CD8-positive, alpha-beta T cell (primary cell): ENCODE measurements at regions of chr21 and their contacts with region 1.

Region 1: DNA sequence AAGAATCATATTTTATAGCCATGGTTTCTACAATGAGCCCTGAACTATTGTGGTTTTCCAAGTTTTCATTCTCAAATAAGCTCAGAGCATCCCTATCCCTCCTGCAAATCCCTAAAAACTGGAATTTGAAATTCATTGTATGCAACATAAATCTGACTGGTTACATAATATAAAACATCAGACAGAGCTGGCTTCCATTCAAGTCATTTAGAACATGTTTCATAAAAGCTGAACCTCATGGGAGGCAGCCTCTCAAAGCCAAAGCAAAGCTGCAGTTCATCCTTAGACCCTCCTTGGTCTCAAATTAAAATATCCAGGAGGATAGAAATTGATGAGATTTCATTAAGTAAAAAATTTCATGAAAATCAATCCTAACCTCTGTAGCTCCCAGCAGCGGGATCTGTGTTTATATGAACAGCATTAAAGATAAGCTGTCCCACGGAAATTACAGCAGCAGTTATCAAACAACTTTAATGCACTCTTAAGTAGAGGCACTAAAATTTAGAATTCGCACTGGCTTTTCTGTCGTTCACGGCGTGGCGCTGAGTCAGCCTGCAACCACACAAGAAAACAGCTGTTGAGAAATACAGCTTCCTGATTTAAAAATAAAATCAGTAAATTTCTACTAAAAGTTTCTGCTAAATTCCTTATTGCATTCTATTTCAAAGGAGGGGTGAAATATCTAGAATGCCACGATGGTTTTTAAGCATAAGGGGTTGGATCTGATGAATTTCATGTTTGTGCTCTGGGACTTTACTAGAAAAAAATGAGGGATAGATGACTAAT is 99.9 kb upstream of the TIAM1 start:
- DNase-seq: peak in 5 of 9 experiments; percentile 9 to 54 (median 19)
- ATAC-seq: no peak
- H3K4me3 ChIP-seq: no peak overlapping the region
- H3K4me3 Mint-ChIP-seq: peak overlapping the region; percentile 20
- H3K27ac ChIP-seq: no peak overlapping the region
- H3K27ac Mint-ChIP-seq: peak overlapping the region; percentile 28
- H3K4me1 ChIP-seq: peaks cover 34% of the 10 kb centered on the region
- H3K4me1 Mint-ChIP-seq: peaks cover 56% of the 10 kb centered on the region
- H3K27me3 ChIP-seq: no peaks in the 10 kb centered on the region
- H3K27me3 Mint-ChIP-seq: no peaks in the 10 kb centered on the region
- CTCF ChIP-seq: no peak

Region 2: GRCh38 chr21:31132574-31133242 is 311.2 kb before region 1 on chr21:
- CTCF ChIA-PET with region 1: no interaction called
- POLR2A ChIA-PET with region 1: no interaction called
- intact Hi-C with region 1: loop called in 1 of 2 experiments (anchors 1 kb)
- DNase-seq: peak; percentile 47 to 92 (median 77)
- ATAC-seq: peak; percentile 91
- H3K4me3 ChIP-seq: peak overlapping the region; percentile 10 to 42
- H3K4me3 Mint-ChIP-seq: peak overlapping the region; percentile 80
- H3K27ac ChIP-seq: no peak overlapping the region
- H3K27ac Mint-ChIP-seq: peak overlapping the region; percentile 58
- H3K4me1 ChIP-seq: peaks cover 35% of the 10 kb centered on the region
- H3K4me1 Mint-ChIP-seq: peaks cover 47% of the 10 kb centered on the region
- H3K27me3 ChIP-seq: peaks cover 0 to 4% of the 10 kb centered on the region in 2 experiments
- H3K27me3 Mint-ChIP-seq: peaks cover 3% of the 10 kb centered on the region
- CTCF ChIP-seq: no peak

Region 3: GRCh38 chr21:31282095-31282709 is 161.7 kb before region 1 on chr21:
- CTCF ChIA-PET with region 1: no interaction called
- POLR2A ChIA-PET with region 1: no interaction called
- intact Hi-C with region 1: loop called in 1 of 2 experiments (anchors 10 kb)
- DNase-seq: no peak
- ATAC-seq: no peak
- H3K4me3 ChIP-seq: no peak overlapping the region
- H3K4me3 Mint-ChIP-seq: no peak overlapping the region
- H3K27ac ChIP-seq: no peak overlapping the region
- H3K27ac Mint-ChIP-seq: peak overlapping the region; percentile 70
- H3K4me1 ChIP-seq: peaks cover 17% of the 10 kb centered on the region
- H3K4me1 Mint-ChIP-seq: peaks cover 31% of the 10 kb centered on the region
- H3K27me3 ChIP-seq: no peaks in the 10 kb centered on the region
- H3K27me3 Mint-ChIP-seq: no peaks in the 10 kb centered on the region
- CTCF ChIP-seq: no peak

Region 4: GRCh38 chr21:31354604-31355443 is 89.1 kb before region 1 on chr21:
- CTCF ChIA-PET with region 1: no interaction called
- POLR2A ChIA-PET with region 1: no interaction called
- intact Hi-C with region 1: loop called in 1 of 2 experiments (anchors 5 kb)
- DNase-seq: peak; percentile 23 to 90 (median 69)
- ATAC-seq: peak; percentile 87
- H3K4me3 ChIP-seq: no peak overlapping the region
- H3K4me3 Mint-ChIP-seq: peak overlapping the region; percentile 27
- H3K27ac ChIP-seq: peak overlapping the region in 1 of 2 experiments; percentile 25
- H3K27ac Mint-ChIP-seq: peak overlapping the region; percentile 76
- H3K4me1 ChIP-seq: peaks cover 21% of the 10 kb centered on the region
- H3K4me1 Mint-ChIP-seq: peaks cover 30% of the 10 kb centered on the region
- H3K27me3 ChIP-seq: no peaks in the 10 kb centered on the region
- H3K27me3 Mint-ChIP-seq: no peaks in the 10 kb centered on the region
- CTCF ChIP-seq: no peak

Region 5: GRCh38 chr21:31397515-31397926 is 46.4 kb before region 1 on chr21:
- CTCF ChIA-PET with region 1: interaction called, 4 read pairs
- POLR2A ChIA-PET with region 1: interaction called, 3 read pairs
- intact Hi-C with region 1: loop called in 1 of 2 experiments (anchors 5 kb)
- DNase-seq: no peak
- ATAC-seq: no peak
- H3K4me3 ChIP-seq: peak overlapping the region in 1 of 2 experiments; percentile 14
- H3K4me3 Mint-ChIP-seq: no peak overlapping the region
- H3K27ac ChIP-seq: no peak overlapping the region
- H3K27ac Mint-ChIP-seq: peak overlapping the region; percentile 84
- H3K4me1 ChIP-seq: peaks cover 47% of the 10 kb centered on the region
- H3K4me1 Mint-ChIP-seq: peaks cover 58% of the 10 kb centered on the region
- H3K27me3 ChIP-seq: peaks cover 0 to 2% of the 10 kb centered on the region in 2 experiments
- H3K27me3 Mint-ChIP-seq: no peaks in the 10 kb centered on the region
- CTCF ChIP-seq: no peak

Region 6: DNA sequence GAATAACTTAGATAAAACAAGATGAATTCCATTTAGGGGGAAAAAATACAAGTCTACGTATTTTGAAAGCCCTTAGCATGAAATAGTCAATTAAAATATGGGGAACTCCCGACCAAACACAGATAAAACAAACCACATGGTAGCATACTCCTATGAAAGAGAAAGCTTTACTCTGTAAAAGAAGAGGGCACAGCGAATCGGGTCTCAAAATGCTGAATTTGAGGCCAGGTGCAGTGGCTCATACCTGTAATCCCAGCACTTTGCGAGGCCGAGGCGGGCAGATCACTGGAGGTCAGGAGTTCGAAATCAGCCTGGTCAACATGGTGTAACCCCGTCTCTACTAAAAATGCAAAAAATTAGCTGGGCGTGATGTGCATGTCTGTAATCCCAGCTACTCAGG is 17.1 kb after region 1 on chr21:
- CTCF ChIA-PET with region 1: interaction called, 3 read pairs
- POLR2A ChIA-PET with region 1: interaction called, 4 read pairs
- intact Hi-C with region 1: loop called in 1 of 2 experiments (anchors 2 kb)
- DNase-seq: peak in 3 of 9 experiments; percentile 8 to 69 (median 34)
- ATAC-seq: peak; percentile 94
- H3K4me3 ChIP-seq: no peak overlapping the region
- H3K4me3 Mint-ChIP-seq: peak overlapping the region; percentile 49
- H3K27ac ChIP-seq: no peak overlapping the region
- H3K27ac Mint-ChIP-seq: peak overlapping the region; percentile 70
- H3K4me1 ChIP-seq: peaks cover 14% of the 10 kb centered on the region
- H3K4me1 Mint-ChIP-seq: peaks cover 15% of the 10 kb centered on the region
- H3K27me3 ChIP-seq: no peaks in the 10 kb centered on the region
- H3K27me3 Mint-ChIP-seq: no peaks in the 10 kb centered on the region
- CTCF ChIP-seq: no peak

Region 7: DNA sequence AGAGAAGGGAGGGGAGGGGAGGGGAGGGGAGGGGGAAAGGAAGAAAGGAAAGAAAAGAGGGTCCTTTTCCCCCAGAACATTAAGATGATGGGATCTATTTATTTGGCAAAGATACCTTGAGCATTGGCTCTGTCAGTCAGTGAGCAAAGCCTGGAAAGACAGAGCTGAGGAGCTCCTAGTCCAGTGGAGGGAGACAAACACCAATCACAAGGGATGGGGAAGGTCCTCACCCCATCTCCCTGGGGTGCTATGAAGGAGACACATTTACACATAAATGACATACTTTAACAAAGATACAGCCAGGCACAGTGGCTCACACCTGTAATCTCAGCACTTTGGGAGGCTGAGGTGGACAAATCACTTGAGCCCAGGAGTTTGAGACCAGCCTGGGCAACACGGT is 55.1 kb after region 1 on chr21:
- CTCF ChIA-PET with region 1: no interaction called
- POLR2A ChIA-PET with region 1: no interaction called
- intact Hi-C with region 1: no loop called
- DNase-seq: no peak
- ATAC-seq: no peak
- H3K4me3 ChIP-seq: no peak overlapping the region
- H3K4me3 Mint-ChIP-seq: no peak overlapping the region
- H3K27ac ChIP-seq: no peak overlapping the region
- H3K27ac Mint-ChIP-seq: no peak overlapping the region
- H3K4me1 ChIP-seq: no peaks in the 10 kb centered on the region
- H3K4me1 Mint-ChIP-seq: no peaks in the 10 kb centered on the region
- H3K27me3 ChIP-seq: no peaks in the 10 kb centered on the region
- H3K27me3 Mint-ChIP-seq: no peaks in the 10 kb centered on the region
- CTCF ChIP-seq: no peak

Region 8: DNA sequence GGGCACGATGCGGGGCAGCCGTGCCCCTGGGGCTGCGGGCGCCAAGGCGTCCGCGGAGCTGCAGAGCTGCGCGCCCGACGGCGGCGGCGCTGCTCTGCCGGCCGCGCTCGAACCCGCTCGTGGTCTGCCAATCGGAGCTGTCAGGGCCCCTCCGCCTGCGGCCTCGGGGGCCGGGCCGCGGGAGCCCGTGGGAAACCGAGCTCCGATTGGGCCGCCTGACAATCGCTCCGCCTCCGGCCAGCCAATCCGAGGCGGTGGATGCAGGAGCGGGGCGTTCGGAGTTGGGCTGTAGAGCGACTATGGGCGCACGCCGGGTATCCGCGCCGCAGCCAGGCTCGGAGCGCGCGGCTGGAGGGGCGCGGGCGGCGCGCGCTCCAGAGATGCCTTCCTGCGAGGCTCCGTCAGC is 115.0 kb after region 1 on chr21:
- CTCF ChIA-PET with region 1: interaction called, 4 read pairs
- POLR2A ChIA-PET with region 1: interaction called, 11 read pairs
- intact Hi-C with region 1: loop called in 1 of 2 experiments (anchors 5 kb)
- DNase-seq: peak; percentile 76 to 93 (median 89)
- ATAC-seq: peak; percentile 83
- H3K4me3 ChIP-seq: peak overlapping the region; percentile 51 to 54
- H3K4me3 Mint-ChIP-seq: peak overlapping the region; percentile 92
- H3K27ac ChIP-seq: peak overlapping the region in 1 of 2 experiments; percentile 7
- H3K27ac Mint-ChIP-seq: no peak overlapping the region
- H3K4me1 ChIP-seq: peaks cover 15% of the 10 kb centered on the region
- H3K4me1 Mint-ChIP-seq: peaks cover 25% of the 10 kb centered on the region
- H3K27me3 ChIP-seq: peaks cover 0 to 2% of the 10 kb centered on the region in 2 experiments
- H3K27me3 Mint-ChIP-seq: peaks cover 8% of the 10 kb centered on the region
- CTCF ChIP-seq: no peak